ENCODE measurements at regions of chr18 and their contacts with region 1.

Region 1: DNA sequence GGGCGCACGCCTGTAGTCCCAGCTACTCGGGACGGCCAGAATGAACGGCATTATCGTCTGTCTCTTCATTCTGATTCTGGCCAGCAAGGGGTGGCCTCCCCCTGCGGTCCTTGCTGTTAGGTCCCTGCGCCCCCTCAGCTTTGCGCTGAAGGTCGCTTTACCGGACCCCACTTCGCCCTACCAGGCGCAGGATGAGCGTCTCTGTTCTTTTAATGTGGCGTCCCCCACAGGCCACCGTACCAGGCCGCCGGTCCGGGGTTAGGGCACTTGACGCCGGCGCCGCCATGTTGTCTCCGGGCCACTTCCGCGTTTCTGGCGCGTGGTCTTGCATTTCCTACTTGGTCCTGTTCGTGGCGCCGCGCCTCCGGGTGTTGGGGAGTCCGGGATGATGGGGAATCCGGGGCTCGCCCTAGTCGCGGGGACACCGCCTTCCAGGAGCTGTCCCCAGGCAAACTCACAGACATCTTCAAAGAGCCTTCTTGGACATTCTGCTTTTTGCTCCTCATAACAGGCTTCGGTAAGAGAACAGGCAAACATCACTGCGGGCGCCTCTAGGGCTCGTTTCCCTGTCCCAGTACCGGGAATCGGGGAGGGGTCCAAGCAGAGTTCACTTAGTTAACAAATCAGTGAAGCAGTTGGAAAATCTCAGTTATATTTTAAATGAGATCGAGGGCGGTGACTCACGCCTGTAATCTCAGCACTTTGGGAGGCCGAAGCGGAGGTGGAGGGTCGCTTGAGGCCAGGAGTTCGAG is 8.5 kb upstream of the NARS1 start:
- DNase-seq: peak; percentile 97
- ATAC-seq: peak; percentile 97 to 100 (median 99)
- H3K4me3 ChIP-seq: peak overlapping the region; percentile 50 to 77 (median 64)
- H3K27ac ChIP-seq: peak overlapping the region in 9 of 10 donors; percentile 71 to 91 (median 77)
- H3K4me1 ChIP-seq: peaks cover 0 to 19% (median 7%) of the 10 kb centered on the region in 9 donors
- H3K27me3 ChIP-seq: no peaks in the 10 kb centered on the region
- CTCF ChIP-seq: peak; percentile 39 to 92 (median 78)

Region 2: DNA sequence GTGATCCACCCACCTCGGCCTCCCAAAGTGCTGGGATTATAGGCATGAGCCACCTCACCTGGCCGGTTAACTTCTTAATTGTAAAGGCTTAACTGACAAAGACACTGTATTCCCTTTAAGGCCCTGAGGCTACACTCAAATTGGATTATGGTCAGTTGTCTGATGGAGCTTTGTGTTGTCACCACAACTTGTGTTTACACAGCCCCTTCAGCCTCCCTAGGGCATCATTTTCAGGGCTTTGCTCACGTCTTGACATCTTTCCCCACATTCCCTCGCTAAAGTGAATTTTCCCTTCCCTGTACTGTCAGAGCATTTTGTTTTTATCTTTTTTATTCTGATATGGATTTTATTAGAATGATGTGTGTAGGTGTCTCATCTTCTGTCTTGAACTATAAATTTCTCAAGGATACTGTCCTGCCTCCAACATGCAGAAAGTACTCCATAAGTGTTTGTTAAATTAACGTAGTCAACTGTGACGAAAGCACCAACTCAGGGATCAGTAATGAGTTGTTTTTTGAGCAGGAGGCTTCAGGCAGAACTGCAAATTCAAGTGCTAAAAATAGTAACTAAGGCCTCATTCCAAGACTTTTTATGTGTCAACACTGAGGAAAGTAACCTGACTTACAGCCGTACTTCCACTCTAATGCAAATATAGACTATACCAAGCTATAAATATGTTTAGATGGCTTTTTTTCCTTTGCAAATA is 68.5 kb after region 1 on chr18:
- intact Hi-C with region 1: loop called in 1 of 10 experiments (anchors 10 kb)
- DNase-seq: no peak
- ATAC-seq: peak; percentile 51 to 77 (median 64)
- H3K4me3 ChIP-seq: no peak overlapping the region
- H3K27ac ChIP-seq: peak overlapping the region in 9 of 10 donors; percentile 4 to 74 (median 30)
- H3K4me1 ChIP-seq: peaks cover 0 to 27% (median 9%) of the 10 kb centered on the region in 9 donors
- H3K27me3 ChIP-seq: no peaks in the 10 kb centered on the region
- CTCF ChIP-seq: no peak

Region 3: GRCh38 chr18:58038063-58038462 is 407.9 kb after region 1 on chr18:
- intact Hi-C with region 1: loop called in 5 of 10 experiments (anchors 5 to 10 kb)
- DNase-seq: no peak
- ATAC-seq: no peak
- H3K4me3 ChIP-seq: no peak overlapping the region
- H3K27ac ChIP-seq: no peak overlapping the region
- H3K4me1 ChIP-seq: peaks cover 0 to 14% (median 3%) of the 10 kb centered on the region in 9 donors
- H3K27me3 ChIP-seq: peaks cover 0 to 22% (median 10%) of the 10 kb centered on the region in 7 donors
- CTCF ChIP-seq: no peak